ENCODE measurements at regions of chr2 and their contacts with region 1.

Region 1: DNA sequence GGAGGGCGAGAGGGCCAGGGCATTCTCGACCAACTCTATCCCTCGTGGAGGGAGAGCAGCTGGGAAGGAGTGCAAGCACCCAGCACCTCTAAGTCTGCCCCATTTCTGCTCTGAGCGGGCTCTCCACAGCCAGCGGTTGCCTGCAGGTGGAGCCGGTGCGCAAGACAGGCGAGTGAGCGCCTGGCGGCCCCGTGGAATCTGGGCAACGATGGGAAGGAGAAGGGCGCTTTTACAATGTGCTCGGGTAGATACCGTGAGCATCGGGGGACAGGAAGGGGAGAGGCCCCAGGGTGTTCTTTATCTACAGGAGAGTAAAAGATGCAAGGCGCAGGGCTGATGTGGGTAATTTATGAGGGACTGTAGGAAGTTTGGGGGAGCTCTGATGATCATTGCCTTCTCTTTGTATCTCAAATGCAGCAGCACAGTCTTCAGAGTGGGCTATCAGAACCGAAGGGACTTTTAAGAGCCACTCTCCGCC is 867 bp upstream of the TTL start:
- DNase-seq: peak; percentile 86 to 91 (median 88)
- ATAC-seq: peak; percentile 87 to 91 (median 88)
- H3K4me3 ChIP-seq: peak overlapping the region; percentile 67 to 80 (median 71)
- H3K27ac ChIP-seq: peak overlapping the region; percentile 48 to 71 (median 68)
- H3K4me1 ChIP-seq: peaks cover 0 to 10% (median 0%) of the 10 kb centered on the region in 4 donors
- H3K27me3 ChIP-seq: no peaks in the 10 kb centered on the region
- CTCF ChIP-seq: peak; percentile 62 to 77 (median 75)
- POLR2A ChIP-seq: no peak

Region 2: GRCh38 chr2:112579241-112579640 is 98.2 kb after region 1 on chr2:
- intact Hi-C with region 1: loop called in 1 of 2 experiments (anchors 10 kb)
- DNase-seq: no peak
- ATAC-seq: peak in 1 of 4 donors; percentile 5
- H3K4me3 ChIP-seq: no peak overlapping the region
- H3K27ac ChIP-seq: no peak overlapping the region
- H3K4me1 ChIP-seq: peaks cover 0 to 6% (median 0%) of the 10 kb centered on the region in 4 donors
- H3K27me3 ChIP-seq: no peaks in the 10 kb centered on the region
- CTCF ChIP-seq: no peak
- POLR2A ChIP-seq: no peak

Region 3: DNA sequence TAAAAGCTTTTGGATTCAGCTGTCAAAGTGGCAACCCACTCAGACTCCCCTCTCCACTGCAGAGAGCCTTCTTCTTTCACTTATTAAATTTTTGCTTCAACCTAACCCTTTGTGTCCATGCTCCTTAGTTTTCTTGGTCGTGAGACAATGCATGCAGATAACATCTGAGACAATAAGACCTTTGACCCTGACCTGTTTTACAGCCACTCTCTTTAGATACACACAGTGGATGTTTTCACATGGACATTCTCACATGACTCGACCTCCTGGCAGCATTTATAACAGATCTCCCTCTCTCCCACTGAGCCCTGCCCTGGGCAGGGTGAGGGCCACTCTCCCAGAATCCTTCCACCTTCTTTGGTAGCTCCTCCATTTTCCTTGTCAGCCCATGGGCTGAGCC is 466.3 kb after region 1 on chr2:
- intact Hi-C with region 1: no loop called
- DNase-seq: no peak
- ATAC-seq: no peak
- H3K4me3 ChIP-seq: no peak overlapping the region
- H3K27ac ChIP-seq: no peak overlapping the region
- H3K4me1 ChIP-seq: no peaks in the 10 kb centered on the region
- H3K27me3 ChIP-seq: no peaks in the 10 kb centered on the region
- CTCF ChIP-seq: no peak
- POLR2A ChIP-seq: no peak

Measured in right lobe of liver (tissue), 6 donors.